PC-9 (cell line): ENCODE measurements at regions of chrX and their contacts with region 1.

Region 1: DNA sequence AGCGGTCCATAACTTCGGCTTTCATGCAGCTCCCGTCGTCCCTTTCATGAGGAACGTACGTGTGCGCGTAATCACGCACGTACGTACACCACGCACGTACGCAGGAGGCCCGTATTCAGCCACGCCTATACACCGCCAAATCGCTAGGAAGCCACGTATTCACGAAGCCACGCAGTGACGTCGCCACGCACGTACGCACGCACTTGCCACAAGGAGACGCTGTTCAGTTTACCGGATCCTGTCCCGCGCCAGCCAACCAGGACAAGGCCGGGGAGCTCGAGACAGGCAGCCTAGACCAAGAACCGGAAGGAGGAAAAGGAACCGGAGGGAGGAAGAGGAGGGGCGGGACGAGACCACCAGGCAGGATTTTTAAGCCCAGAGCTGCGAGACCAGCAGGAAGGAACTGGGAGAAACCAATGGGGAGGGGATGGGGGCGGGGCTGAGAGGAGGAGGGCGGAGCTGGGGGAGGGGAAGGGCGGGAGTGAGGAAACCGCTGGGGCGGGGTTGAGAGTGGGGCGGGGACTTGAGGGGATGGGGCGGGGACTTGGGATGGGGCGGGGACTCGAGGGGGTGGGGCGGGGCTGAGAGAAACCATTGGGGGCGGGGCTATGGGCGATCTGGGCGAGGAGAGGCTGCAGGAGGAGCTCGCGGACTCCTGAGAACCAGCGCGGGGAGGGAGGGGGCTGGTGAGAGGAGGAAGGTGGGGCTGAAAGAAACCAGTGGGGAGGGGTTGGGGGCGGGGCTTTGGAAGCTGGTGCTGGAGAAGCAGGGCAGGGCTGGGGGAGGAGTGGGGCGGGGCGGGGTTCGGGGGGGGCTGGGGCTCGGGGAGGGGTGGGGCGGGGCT is at the start of gene EOLA2:
- DNase-seq: peak; percentile 96 to 99
- H3K4me3 ChIP-seq: peak within 1 kb of the TSS; percentile 85
- H3K27ac ChIP-seq: peak within 1 kb of the TSS; percentile 95
- H3K4me1 ChIP-seq: peaks cover 4% of the 10 kb centered on the region; the same call in 1 of the 2 replicates
- H3K27me3 ChIP-seq: no peaks in the 10 kb centered on the region
- CTCF ChIP-seq: peak; percentile 84
- total RNA-seq, gene EOLA2: 44.3 and 49.2 TPM in 2 replicates

Region 2: GRCh38 chrX:149539283-149540130 is 399.1 kb before region 1 on chrX:
- CTCF ChIA-PET with region 1: interaction called, 23 read pairs
- POLR2A ChIA-PET with region 1: interaction called, 20 read pairs
- intact Hi-C with region 1: no loop called
- DNase-seq: peak; percentile 95
- H3K4me3 ChIP-seq: peak overlapping the region; percentile 68
- H3K27ac ChIP-seq: peak overlapping the region; percentile 62
- H3K4me1 ChIP-seq: peaks cover 8% of the 10 kb centered on the region
- H3K27me3 ChIP-seq: no peaks in the 10 kb centered on the region
- CTCF ChIP-seq: no peak

Region 3: GRCh38 chrX:149916745-149917378 is 21.8 kb before region 1 on chrX:
- CTCF ChIA-PET with region 1: no interaction called
- POLR2A ChIA-PET with region 1: no interaction called
- intact Hi-C with region 1: no loop called
- DNase-seq: no peak
- H3K4me3 ChIP-seq: no peak overlapping the region
- H3K27ac ChIP-seq: no peak overlapping the region
- H3K4me1 ChIP-seq: no peaks in the 10 kb centered on the region
- H3K27me3 ChIP-seq: no peaks in the 10 kb centered on the region
- CTCF ChIP-seq: no peak

Region 4: DNA sequence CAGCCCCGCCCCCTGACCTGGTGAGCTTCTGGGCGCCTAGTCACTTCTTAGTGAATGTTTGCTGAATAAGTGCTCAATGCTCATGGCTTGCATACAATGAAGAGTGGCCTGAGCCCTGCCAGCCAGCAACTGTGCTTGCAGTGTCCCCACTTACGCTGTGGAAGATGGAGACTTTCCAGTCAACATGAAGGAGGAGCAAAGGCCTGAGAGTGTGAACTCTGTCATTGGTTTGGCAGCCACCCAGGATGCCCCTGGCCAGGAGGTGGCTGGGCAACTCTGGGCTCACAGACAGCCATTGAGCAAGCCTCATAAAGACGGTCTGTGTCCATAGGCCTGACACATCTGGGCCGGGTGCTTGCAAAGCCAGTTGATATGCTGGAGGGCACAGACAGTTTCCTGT is 352.4 kb after region 1 on chrX:
- CTCF ChIA-PET with region 1: no interaction called
- POLR2A ChIA-PET with region 1: no interaction called
- intact Hi-C with region 1: no loop called
- DNase-seq: peak in 1 of 2 experiments; percentile 66
- H3K4me3 ChIP-seq: no peak overlapping the region
- H3K27ac ChIP-seq: no peak overlapping the region
- H3K4me1 ChIP-seq: peaks cover 25% of the 10 kb centered on the region
- H3K27me3 ChIP-seq: no peaks in the 10 kb centered on the region
- CTCF ChIP-seq: no peak

Region 5: DNA sequence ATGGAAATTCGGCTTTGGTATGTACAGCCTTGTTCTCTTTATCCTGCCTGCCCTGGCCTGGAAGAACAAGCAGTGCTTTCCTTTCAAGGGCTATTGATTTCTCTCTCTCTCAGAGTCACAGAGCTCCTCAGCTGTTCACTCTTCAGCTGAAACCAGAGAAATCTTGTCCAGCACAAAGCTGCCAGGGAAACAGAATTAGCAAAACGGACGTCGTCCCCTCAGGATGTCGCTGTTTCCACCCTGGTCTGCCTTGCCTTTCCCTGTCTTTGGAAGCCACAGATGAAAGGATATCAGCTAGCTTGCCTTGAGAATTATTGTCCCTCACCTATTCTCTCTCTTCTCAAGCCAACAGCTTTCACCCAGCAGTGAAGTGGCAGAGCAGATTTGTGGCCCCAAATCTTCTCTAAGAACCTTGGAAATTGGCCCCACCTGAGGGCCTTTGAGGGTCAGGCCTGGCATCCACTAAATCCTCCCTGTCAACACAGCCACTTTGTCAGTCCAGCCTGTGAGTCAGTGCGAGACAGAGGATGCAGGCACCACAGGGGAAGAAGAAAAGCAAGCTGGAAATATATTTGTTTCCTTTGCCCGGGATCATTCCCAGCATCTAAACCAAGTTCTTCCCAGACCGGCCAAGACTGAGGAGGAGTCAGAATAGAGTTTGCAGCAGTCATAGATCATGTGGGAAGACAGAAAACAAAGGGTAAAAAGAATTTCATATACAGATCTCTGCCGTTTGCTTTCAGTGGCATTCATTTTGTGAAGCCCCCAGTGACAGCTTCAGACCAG is 565.9 kb after region 1 on chrX:
- CTCF ChIA-PET with region 1: no interaction called
- POLR2A ChIA-PET with region 1: interaction called, 18 read pairs
- intact Hi-C with region 1: no loop called
- DNase-seq: no peak
- H3K4me3 ChIP-seq: no peak overlapping the region
- H3K27ac ChIP-seq: no peak overlapping the region
- H3K4me1 ChIP-seq: peaks cover 6% of the 10 kb centered on the region
- H3K27me3 ChIP-seq: no peaks in the 10 kb centered on the region
- CTCF ChIP-seq: no peak

Region 6: GRCh38 chrX:150693775-150694574 is 755.3 kb after region 1 on chrX:
- CTCF ChIA-PET with region 1: interaction called, 10 read pairs
- POLR2A ChIA-PET with region 1: interaction called, 13 read pairs
- intact Hi-C with region 1: no loop called
- DNase-seq: peak; percentile 88 to 99
- H3K4me3 ChIP-seq: peak overlapping the region; percentile 75
- H3K27ac ChIP-seq: peak overlapping the region; percentile 93
- H3K4me1 ChIP-seq: peaks cover 50% of the 10 kb centered on the region
- H3K27me3 ChIP-seq: no peaks in the 10 kb centered on the region
- CTCF ChIP-seq: 0 out of 2 replicates have a peak, but pooled peaks have one; percentile 16

Region 7: DNA sequence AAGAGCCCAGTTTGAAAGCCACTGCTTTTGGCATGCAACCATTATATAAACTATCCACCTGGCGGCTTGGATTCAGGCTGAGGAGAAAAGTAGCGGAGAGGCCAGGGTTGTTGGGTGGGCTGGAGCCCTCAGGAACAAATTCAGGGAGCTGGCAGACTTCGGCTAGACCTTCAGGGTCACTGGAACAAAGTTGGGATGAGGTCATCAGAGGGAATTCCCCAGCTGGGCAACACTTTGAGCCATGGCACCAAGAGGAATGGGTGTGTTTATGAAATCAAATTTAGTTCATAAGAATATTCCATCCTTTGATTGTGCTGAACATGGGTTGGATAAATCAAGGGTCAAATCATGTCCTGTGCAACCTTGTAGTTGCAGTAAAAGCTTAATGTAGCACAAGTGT is 776.5 kb after region 1 on chrX:
- CTCF ChIA-PET with region 1: no interaction called
- POLR2A ChIA-PET with region 1: no interaction called
- intact Hi-C with region 1: no loop called
- DNase-seq: no peak
- H3K4me3 ChIP-seq: no peak overlapping the region
- H3K27ac ChIP-seq: no peak overlapping the region
- H3K4me1 ChIP-seq: peaks cover 6% of the 10 kb centered on the region
- H3K27me3 ChIP-seq: no peaks in the 10 kb centered on the region
- CTCF ChIP-seq: no peak

Region 8: DNA sequence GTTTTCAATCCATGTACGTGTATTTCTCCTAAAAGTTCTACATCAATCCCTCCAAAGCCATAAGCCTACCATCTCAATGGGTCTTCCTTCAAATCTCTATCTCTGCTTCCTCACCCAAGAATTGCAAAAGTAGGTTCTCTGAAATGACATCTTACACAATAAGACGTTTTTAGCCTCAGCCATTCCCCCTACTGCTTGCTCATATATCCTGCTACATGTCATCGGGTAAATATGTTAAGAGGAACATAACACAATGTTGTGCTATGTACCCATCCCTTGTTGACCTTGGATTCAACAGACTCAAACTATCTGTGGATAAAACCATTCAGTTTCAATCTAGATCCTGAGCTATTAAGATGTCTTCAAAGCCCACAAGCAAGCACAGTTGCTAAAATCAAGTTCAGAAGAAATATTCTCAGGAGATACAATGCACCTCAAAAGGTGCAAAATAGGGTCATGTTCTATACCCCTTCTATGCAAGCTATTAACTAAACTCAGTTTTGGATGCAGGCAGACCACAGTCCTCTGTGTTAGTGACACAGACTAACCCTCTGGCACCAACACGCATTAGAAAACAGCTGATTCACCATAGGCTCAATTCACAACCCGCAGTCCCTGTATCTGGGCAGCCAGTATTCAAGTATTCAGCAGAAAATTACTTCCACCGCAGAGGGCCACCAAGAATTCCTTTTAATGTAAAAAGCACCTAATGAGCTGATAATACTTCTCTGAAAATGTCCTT is 903.0 kb after region 1 on chrX:
- CTCF ChIA-PET with region 1: no interaction called
- POLR2A ChIA-PET with region 1: interaction called, 12 read pairs
- intact Hi-C with region 1: no loop called
- DNase-seq: no peak
- H3K4me3 ChIP-seq: no peak overlapping the region
- H3K27ac ChIP-seq: no peak overlapping the region
- H3K4me1 ChIP-seq: peaks cover 11% of the 10 kb centered on the region
- H3K27me3 ChIP-seq: no peaks in the 10 kb centered on the region
- CTCF ChIP-seq: no peak